Esophagus squamous epithelium (tissue), 5 donors: ENCODE measurements at regions of chr3 and their contacts with region 1.

Region 1: GRCh38 chr3:69306239-69307185 is 79.4 kb downstream of the FRMD4B start:
- DNase-seq: no peak
- H3K4me3 ChIP-seq: no peak overlapping the region
- H3K27ac ChIP-seq: peak overlapping the region in 3 of 4 donors; percentile 3 to 73 (median 56)
- H3K4me1 ChIP-seq: peaks cover 0 to 21% (median 4%) of the 10 kb centered on the region in 3 donors
- H3K27me3 ChIP-seq: no peaks in the 10 kb centered on the region
- CTCF ChIP-seq: peak; percentile 81 to 92 (median 86)
- POLR2A ChIP-seq: no peak

Region 2: GRCh38 chr3:69379661-69380060 is 73.1 kb after region 1 on chr3:
- intact Hi-C with region 1: no loop called
- DNase-seq: no peak
- H3K4me3 ChIP-seq: no peak overlapping the region
- H3K27ac ChIP-seq: no peak overlapping the region
- H3K4me1 ChIP-seq: peaks cover 0 to 10% (median 0%) of the 10 kb centered on the region in 3 donors
- H3K27me3 ChIP-seq: no peaks in the 10 kb centered on the region
- CTCF ChIP-seq: no peak
- POLR2A ChIP-seq: no peak

Region 3: GRCh38 chr3:69410250-69410649 is 103.7 kb after region 1 on chr3:
- intact Hi-C with region 1: loop called (anchors 10 kb)
- DNase-seq: no peak
- H3K4me3 ChIP-seq: no peak overlapping the region
- H3K27ac ChIP-seq: peak overlapping the region in 3 of 4 donors; percentile 26 to 63 (median 51)
- H3K4me1 ChIP-seq: peaks cover 3 to 34% (median 5%) of the 10 kb centered on the region in 3 donors
- H3K27me3 ChIP-seq: no peaks in the 10 kb centered on the region
- CTCF ChIP-seq: peak; percentile 44 to 85 (median 70)
- POLR2A ChIP-seq: no peak